ENCODE measurements at regions of chrX and their contacts with region 1.

Region 1: GRCh38 chrX:9341291-9342201 is 123.3 kb upstream of the TBL1X start:
- DNase-seq: peak; percentile 59 to 69 (median 69)
- ATAC-seq: peak; percentile 39 to 65 (median 48)
- H3K4me3 ChIP-seq: peak overlapping the region; percentile 16 to 31 (median 16)
- H3K27ac ChIP-seq: peak overlapping the region; percentile 59 to 77 (median 62)
- H3K4me1 ChIP-seq: peaks cover 0 to 16% (median 0%) of the 10 kb centered on the region in 4 donors
- H3K27me3 ChIP-seq: no peaks in the 10 kb centered on the region
- CTCF ChIP-seq: no peak
- POLR2A ChIP-seq: no peak

Region 2: DNA sequence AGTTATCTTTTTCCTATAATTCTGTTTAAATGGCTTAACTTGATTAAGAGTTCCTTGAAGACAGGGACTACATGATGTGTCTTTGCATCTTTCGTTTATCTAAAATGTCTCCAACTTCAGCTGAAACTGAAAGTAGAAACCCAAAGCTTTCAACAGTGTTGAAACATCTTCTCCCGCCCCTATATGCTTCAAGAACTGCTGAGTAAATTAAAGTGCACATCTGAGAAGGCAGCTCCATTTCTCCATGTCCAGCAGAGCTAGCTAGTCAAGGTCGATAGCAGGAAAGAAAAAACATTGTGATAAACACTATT is 62.4 kb before region 1 on chrX:
- intact Hi-C with region 1: no loop called
- DNase-seq: no peak
- ATAC-seq: peak in 2 of 4 donors; percentile 41 to 44
- H3K4me3 ChIP-seq: no peak overlapping the region
- H3K27ac ChIP-seq: no peak overlapping the region
- H3K4me1 ChIP-seq: no peaks in the 10 kb centered on the region
- H3K27me3 ChIP-seq: no peaks in the 10 kb centered on the region
- CTCF ChIP-seq: no peak
- POLR2A ChIP-seq: no peak

Region 3: DNA sequence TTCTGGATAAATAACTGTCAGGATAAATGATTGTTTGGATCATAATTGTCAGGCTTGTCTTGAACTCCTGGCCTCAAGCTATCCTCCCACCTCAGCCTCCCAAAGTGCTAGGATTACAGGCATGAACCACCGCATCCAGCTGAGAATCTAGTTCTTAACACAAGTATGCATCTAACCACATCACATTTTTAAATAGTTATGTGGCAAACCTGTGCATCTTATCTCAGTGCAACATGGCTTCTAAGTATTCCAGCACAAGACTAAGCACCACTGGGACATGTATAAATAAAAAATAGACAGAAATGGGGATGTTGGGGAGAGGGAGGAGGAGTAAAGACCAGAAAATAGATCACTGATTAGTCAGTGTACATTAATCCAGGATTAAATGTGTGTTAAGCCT is 48.6 kb after region 1 on chrX:
- intact Hi-C with region 1: no loop called
- DNase-seq: no peak
- ATAC-seq: no peak
- H3K4me3 ChIP-seq: no peak overlapping the region
- H3K27ac ChIP-seq: no peak overlapping the region
- H3K4me1 ChIP-seq: no peaks in the 10 kb centered on the region
- H3K27me3 ChIP-seq: no peaks in the 10 kb centered on the region
- CTCF ChIP-seq: no peak
- POLR2A ChIP-seq: no peak

Region 4: DNA sequence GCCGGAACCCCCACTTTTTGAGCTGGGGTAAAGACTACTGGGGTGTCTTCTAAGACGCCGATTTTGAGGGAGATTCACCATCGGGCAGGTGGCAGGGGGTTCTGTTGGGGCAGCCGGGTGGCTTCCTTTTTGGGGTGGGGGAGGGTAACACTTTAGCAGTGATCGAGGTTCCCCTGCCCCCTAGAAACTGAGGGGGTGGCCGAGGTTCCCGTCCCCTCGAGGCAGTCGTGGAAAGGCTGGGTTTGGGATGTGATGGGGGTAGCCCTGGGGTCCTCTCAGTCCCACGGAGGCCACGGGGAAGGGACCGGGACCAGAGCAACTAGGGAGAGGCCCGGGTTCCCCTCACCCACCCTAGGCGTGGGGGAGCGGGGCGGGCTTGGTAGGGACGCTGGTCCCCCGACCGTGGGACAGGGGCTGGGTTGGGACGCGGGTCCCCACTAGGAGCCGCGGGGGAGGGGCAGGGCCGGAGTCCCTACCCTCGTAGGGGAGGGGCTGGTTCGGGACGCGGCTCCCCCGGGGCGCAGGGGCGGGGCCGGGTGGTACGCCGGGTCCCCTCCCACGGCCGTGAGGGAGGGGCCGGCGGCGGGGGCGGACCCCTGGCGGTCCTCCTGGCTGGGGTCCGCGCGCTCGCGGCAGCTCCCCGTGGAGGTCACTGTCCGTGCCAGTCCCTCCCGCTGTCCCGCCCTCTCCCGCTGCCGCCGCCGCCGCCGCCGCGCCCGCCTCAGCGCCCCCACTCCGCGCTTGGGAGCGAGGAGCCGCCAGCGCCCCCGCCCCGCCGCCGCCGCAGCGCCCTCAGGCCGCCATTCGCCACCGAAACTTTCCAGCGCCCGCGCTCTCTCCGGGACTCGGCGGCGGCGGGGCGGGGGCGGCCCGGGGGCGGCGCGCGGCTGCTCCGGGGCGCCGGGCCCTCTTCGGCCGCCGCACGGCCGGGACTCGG is 123.2 kb after region 1 on chrX and contains the start of gene TBL1X:
- intact Hi-C with region 1: loop called (anchors 10 kb)
- DNase-seq: peak; percentile 80 to 86 (median 85)
- ATAC-seq: peak; percentile 56 to 82 (median 72)
- H3K4me3 ChIP-seq: peak within 1 kb of the TSS; percentile 46 to 72 (median 69)
- H3K27ac ChIP-seq: peak within 1 kb of the TSS; percentile 55 to 60 (median 59)
- H3K4me1 ChIP-seq: peaks cover 0 to 32% (median 7%) of the 10 kb centered on the region in 4 donors
- H3K27me3 ChIP-seq: no peaks in the 10 kb centered on the region
- CTCF ChIP-seq: no peak
- POLR2A ChIP-seq: peak; percentile 24
- total RNA-seq, gene TBL1X: 18.0 to 40.7 (median 20.8) TPM

Measured in right lobe of liver (tissue), 6 donors.